Mammary epithelial cell (primary cell): ENCODE measurements at regions of chr4 and their contacts with region 1.

Region 1: GRCh38 chr4:169612871-169613859 is 782 bp upstream of the NEK1 start:
- DNase-seq: peak; percentile 71
- H3K4me3 ChIP-seq: peak overlapping the region; percentile 66 to 99 (median 82)
- H3K27ac ChIP-seq: peak overlapping the region; percentile 74
- H3K4me1 ChIP-seq: peaks cover 11% of the 10 kb centered on the region
- H3K27me3 ChIP-seq: no peaks in the 10 kb centered on the region
- CTCF ChIP-seq: peak; percentile 74 to 79

Region 2: DNA sequence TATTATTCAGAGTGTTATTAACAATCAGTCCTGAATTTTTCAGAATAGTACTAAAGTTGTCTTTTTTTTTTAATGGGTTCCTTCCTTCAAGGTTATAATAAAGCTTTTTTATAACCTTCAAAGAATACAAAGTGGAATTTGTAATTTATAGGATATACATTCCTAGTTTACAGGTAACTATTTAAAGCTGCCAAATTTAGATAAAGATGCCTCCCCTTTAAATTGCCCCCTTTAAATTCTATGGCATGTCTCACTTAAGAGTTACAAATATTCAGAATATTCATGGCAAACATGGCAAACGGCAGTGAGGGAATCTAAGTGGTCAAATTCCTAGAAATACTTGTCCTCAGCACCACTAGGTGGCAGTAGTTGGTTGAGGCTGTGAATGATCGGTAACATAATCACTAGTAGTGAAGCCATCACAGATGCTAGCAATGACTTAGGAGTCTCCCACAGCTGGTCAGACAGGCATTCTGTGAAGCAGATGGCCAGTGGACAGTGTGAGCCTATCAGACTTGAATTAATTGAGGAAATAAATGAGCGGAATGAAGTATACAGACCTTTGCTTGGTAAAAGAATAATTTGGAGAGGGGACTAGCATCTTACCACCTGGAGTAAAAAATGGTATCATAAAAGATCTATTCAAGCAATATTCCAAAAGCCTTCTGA is 689.5 kb before region 1 on chr4:
- CTCF ChIA-PET with region 1: no interaction called
- dilution Hi-C with region 1: no loop called
- in situ Hi-C with region 1: no loop called
- intact Hi-C with region 1: no loop called
- DNase-seq: peak; percentile 42
- H3K4me3 ChIP-seq: no peak overlapping the region
- H3K27ac ChIP-seq: no peak overlapping the region
- H3K4me1 ChIP-seq: no peaks in the 10 kb centered on the region
- H3K27me3 ChIP-seq: no peaks in the 10 kb centered on the region
- CTCF ChIP-seq: peak; percentile 58 to 71

Region 3: GRCh38 chr4:169659716-169660670 is 46.8 kb after region 1 on chr4:
- CTCF ChIA-PET with region 1: interaction called, 4 read pairs
- dilution Hi-C with region 1: no loop called
- in situ Hi-C with region 1: no loop called
- intact Hi-C with region 1: loop called (anchors 2 kb)
- DNase-seq: peak; percentile 98
- H3K4me3 ChIP-seq: peak overlapping the region; percentile 50 to 73 (median 69)
- H3K27ac ChIP-seq: peak overlapping the region; percentile 99
- H3K4me1 ChIP-seq: peaks cover 13% of the 10 kb centered on the region
- H3K27me3 ChIP-seq: no peaks in the 10 kb centered on the region
- CTCF ChIP-seq: no peak

Region 4: DNA sequence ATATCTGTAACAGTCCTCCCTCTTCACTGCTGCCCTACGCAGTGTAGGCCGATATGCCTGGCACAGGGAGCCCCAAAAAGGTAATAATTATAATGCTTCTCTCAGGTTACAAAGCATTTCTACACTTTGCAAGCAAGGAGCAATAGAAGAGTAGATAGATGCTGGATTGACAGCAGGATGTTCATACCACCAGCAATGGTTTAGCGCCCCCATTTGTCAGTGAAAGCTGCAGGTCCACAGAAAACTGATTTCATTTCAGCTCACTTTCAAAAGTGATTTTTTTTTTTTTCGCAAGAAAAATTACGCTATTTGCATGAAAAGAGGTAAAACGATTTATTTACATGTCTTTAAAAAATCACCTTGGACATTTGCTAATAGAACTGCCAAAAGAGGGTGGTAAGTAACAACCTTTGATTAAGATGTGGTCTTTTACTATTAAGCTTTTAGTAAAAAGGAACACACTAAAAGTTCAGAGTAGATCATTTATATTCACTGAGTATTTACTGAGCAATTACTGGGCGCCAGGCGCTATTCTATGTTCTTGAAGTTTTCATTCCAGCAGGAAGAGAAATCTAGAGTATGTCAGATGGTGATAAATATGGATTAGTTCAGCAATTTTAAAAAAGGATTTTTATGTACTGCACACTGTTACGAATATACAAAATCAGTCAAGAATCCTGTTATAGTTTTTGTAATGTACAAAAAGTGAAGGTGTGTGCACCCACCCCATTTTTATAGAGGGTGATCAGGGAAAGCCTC is 110.2 kb after region 1 on chr4:
- CTCF ChIA-PET with region 1: no interaction called
- dilution Hi-C with region 1: no loop called
- in situ Hi-C with region 1: no loop called
- intact Hi-C with region 1: loop called (anchors 2 kb)
- DNase-seq: no peak
- H3K4me3 ChIP-seq: no peak overlapping the region
- H3K27ac ChIP-seq: no peak overlapping the region
- H3K4me1 ChIP-seq: no peaks in the 10 kb centered on the region
- H3K27me3 ChIP-seq: no peaks in the 10 kb centered on the region
- CTCF ChIP-seq: peak in 1 of 2 donors; percentile 10

Region 5: GRCh38 chr4:169810325-169811323 is 197.5 kb after region 1 on chr4:
- CTCF ChIA-PET with region 1: interaction called, 5 read pairs
- dilution Hi-C with region 1: no loop called
- in situ Hi-C with region 1: no loop called
- intact Hi-C with region 1: loop called (anchors 5 kb)
- DNase-seq: peak; percentile 55
- H3K4me3 ChIP-seq: no peak overlapping the region
- H3K27ac ChIP-seq: no peak overlapping the region
- H3K4me1 ChIP-seq: no peaks in the 10 kb centered on the region
- H3K27me3 ChIP-seq: no peaks in the 10 kb centered on the region
- CTCF ChIP-seq: peak; percentile 81 to 83

Region 6: DNA sequence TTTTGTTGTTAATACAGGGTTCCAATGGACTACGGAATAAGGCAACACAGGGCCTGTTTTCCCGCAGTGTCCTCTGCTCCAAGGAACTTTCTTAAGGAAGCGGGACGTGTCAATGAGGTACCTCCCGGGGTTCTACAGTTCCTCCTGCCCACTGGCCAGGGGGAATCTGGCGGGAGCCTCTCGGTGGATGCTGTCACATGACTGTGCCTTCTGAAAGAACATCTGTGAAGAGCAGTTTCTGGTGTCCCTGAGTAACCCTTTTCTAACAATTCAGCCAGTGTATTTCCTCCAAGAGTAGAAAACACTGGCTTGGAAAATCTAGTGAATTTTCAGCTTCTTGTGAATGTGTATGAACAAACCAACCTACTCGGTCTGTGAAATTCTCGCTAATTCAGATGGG is 380.4 kb after region 1 on chr4:
- CTCF ChIA-PET with region 1: no interaction called
- dilution Hi-C with region 1: no loop called
- in situ Hi-C with region 1: no loop called
- intact Hi-C with region 1: no loop called
- DNase-seq: no peak
- H3K4me3 ChIP-seq: no peak overlapping the region
- H3K27ac ChIP-seq: no peak overlapping the region
- H3K4me1 ChIP-seq: no peaks in the 10 kb centered on the region
- H3K27me3 ChIP-seq: no peaks in the 10 kb centered on the region
- CTCF ChIP-seq: no peak

Region 7: DNA sequence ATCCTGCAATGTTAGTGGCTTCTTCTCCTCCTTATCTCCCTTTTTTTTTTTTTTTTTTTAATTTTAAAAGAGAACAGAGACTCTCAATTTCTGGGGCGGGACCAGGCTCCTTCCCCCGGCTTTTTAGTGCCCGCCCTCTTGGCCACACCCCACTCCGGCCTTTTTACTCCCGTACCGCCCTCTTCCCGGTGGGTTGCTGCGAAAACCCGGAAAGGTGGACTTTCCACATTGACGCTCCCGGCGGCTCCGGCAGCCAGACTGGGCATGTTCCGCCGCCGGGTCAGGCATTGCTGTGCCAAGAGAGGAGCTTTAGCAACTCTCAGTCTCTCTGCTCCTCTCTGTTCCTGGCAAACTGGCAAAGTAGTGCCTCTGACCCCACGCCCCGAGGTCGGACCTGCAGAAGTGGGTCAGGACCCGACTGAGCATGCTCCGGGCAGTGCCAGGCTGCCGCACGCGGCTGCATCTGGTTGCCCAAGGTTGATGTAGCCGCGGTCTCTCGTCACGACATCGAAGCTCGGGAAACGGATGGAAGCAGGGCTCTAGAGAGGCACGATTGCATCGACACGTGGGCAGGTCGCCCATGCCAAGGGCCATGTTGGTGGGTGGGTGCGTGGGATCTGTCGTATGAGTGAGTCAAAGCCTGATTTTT is 414.1 kb after region 1 on chr4:
- CTCF ChIA-PET with region 1: interaction called, 3 read pairs
- dilution Hi-C with region 1: no loop called
- in situ Hi-C with region 1: loop called (anchors 25 kb)
- intact Hi-C with region 1: loop called (anchors 5 kb)
- DNase-seq: peak; percentile 96
- H3K4me3 ChIP-seq: peak overlapping the region; percentile 69 to 98 (median 78)
- H3K27ac ChIP-seq: peak overlapping the region; percentile 77
- H3K4me1 ChIP-seq: peaks cover 14% of the 10 kb centered on the region
- H3K27me3 ChIP-seq: no peaks in the 10 kb centered on the region
- CTCF ChIP-seq: no peak

Region 8: DNA sequence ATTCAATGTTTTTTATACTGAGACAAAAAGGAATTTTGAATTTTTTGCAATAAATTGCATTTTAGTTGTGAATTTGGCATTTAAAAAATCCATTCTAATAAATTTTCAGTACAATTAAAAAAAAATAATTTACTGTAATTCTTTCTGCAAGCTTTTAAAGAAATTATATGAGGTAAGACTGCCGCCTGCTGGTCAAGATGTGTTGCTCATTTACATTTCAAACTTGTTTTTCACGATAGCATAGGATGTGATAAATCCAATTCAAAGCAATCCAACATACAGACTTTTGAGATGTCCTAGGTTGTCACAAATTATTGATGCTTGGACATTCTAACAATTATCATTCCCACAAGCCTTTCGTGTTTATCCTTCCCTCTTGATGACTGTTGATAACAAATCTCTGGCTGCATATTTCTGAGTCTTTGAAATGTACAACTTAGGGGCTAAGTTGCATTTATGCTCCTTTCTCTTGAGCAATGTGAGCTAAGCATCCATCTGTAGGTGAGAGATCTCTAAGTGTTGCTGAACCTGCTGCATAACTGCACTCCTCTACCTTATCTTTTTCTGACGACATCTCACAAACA is 434.7 kb after region 1 on chr4:
- CTCF ChIA-PET with region 1: interaction called, 9 read pairs
- dilution Hi-C with region 1: no loop called
- in situ Hi-C with region 1: loop called (anchors 25 kb)
- intact Hi-C with region 1: loop called (anchors 1 kb)
- DNase-seq: peak; percentile 25
- H3K4me3 ChIP-seq: no peak overlapping the region
- H3K27ac ChIP-seq: no peak overlapping the region
- H3K4me1 ChIP-seq: no peaks in the 10 kb centered on the region
- H3K27me3 ChIP-seq: peaks cover 1% of the 10 kb centered on the region
- CTCF ChIP-seq: peak; percentile 78 to 88

Region 9: GRCh38 chr4:170089668-170090351 is 476.6 kb after region 1 on chr4 and contains the start of gene AADAT:
- CTCF ChIA-PET with region 1: no interaction called
- dilution Hi-C with region 1: no loop called
- in situ Hi-C with region 1: no loop called
- intact Hi-C with region 1: loop called (anchors 1 kb)
- DNase-seq: peak; percentile 65
- H3K4me3 ChIP-seq: peak within 1 kb of the TSS; percentile 52 to 78 (median 65)
- H3K27ac ChIP-seq: peak within 1 kb of the TSS; percentile 43
- H3K4me1 ChIP-seq: peaks cover 14% of the 10 kb centered on the region
- H3K27me3 ChIP-seq: no peaks in the 10 kb centered on the region
- CTCF ChIP-seq: peak; percentile 52 to 73
- total RNA-seq, gene AADAT: 5.5 to 8.3 TPM